MCF 10A (cell line): ENCODE measurements at regions of chr7 and their contacts with region 1.

Region 1: DNA sequence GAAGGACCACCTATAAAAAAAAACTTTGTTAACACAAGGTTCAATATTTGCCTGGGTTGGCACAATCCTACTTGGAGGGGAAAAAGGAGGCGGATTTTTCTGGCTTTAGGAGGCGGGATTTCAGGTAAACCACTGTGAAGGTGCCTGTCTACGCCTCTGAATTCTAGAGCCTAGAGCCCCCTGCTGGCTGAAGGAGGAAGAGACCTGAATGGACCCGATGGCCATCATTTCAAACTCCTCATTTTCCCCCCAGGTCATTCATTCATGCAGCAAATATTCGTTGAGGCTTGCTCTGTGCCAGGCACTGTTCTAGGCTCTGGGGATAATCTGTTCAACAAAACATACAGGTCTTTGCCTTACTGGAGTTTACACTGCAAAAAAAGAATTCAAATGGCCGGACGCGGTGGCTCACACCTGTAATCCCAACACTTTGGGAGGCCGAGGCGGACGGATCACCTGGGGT is 90.3 kb upstream of the NFE2L3 start:
- DNase-seq: peak; percentile 79
- H3K4me3 Mint-ChIP-seq: no peak overlapping the region
- H3K27ac Mint-ChIP-seq: no peak overlapping the region
- H3K4me1 Mint-ChIP-seq: no peaks in the 10 kb centered on the region
- H3K27me3 Mint-ChIP-seq: no peaks in the 10 kb centered on the region
- CTCF ChIP-seq: peak; percentile 76

Region 2: DNA sequence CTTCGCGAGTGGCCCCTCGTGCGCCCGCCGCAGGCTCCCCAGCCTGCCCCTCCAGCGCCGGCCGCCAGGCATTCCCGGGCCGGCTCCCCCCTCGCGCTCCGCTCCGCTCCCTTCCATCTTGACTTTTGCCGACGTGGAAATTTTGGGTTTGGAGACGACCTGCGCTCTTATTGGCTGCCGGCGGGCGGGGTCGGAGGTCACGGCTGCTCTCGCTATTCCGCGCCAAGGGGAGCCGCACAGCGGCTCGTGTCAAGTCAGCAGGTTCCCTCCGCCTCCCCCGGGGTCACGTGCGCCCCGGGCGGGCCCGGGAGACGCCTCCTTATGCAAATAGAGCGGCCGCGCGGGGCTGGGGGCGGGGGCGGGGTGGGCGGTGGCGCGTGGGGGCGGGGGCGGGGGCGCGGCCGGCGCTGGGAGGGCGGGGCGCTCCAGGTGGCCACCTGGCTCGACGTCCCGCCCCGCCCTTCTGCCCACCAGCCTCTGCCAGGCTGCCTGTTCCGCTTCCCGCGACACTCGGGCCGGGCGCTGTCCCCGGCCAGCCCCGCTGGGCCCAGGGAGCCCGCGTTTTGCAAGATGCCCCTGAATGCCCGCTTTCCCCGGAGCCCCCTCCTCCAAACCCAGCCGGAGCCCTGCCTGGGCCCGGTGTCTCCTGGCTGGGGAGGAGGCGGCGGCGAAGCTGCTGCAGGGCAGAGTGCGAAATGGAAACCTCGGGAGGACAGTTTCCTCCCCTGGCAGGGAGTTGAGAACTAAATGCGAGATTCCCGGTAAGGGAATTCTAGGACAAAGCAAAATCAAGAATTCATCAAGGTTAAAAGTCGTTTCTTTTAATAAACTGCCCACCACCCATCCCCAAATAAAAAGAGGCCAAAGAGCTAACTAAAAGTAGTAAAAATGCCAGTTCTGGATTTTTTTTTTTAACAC is 110.4 kb before region 1 on chr7:
- CTCF ChIA-PET with region 1: no interaction called
- POLR2A ChIA-PET with region 1: no interaction called
- intact Hi-C with region 1: loop called (anchors 5 kb)
- DNase-seq: peak; percentile 90
- H3K4me3 Mint-ChIP-seq: peak overlapping the region; percentile 85
- H3K27ac Mint-ChIP-seq: peak overlapping the region; percentile 86
- H3K4me1 Mint-ChIP-seq: peaks cover 10% of the 10 kb centered on the region
- H3K27me3 Mint-ChIP-seq: peaks cover 10% of the 10 kb centered on the region
- CTCF ChIP-seq: no peak

Region 3: GRCh38 chr7:26101361-26102151 is 39.8 kb after region 1 on chr7:
- CTCF ChIA-PET with region 1: no interaction called
- POLR2A ChIA-PET with region 1: no interaction called
- intact Hi-C with region 1: no loop called
- DNase-seq: no peak
- H3K4me3 Mint-ChIP-seq: no peak overlapping the region
- H3K27ac Mint-ChIP-seq: no peak overlapping the region
- H3K4me1 Mint-ChIP-seq: peaks cover 10% of the 10 kb centered on the region
- H3K27me3 Mint-ChIP-seq: no peaks in the 10 kb centered on the region
- CTCF ChIP-seq: no peak